Heart right ventricle (tissue), 16 donors: ENCODE measurements at regions of chr5 and their contacts with region 1.

Region 1: DNA sequence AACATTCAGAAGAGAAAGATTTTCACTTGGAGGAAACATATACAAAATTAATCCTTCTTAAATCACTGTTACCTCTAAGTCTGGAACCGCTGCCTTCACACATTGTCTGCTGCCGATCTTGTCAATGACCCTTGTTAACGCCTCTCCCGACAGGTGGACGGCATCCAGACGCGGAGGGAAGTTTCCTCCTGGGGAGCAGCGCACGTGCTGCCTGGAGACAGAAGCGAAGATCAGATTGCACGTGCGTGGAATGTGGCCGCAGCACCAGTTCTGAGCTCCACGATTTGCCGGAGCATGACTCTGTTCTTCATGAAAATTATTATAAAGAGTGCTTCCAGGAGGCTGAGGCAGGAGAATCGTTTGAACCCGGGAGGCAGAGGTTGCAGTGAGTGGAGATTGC is 183.6 kb upstream of the IRX4 start:
- DNase-seq: no peak
- ATAC-seq: no peak
- H3K4me3 ChIP-seq: no peak overlapping the region
- H3K27ac ChIP-seq: no peak overlapping the region
- H3K4me1 ChIP-seq: no peaks in the 10 kb centered on the region
- H3K27me3 ChIP-seq: peaks cover 0 to 19% (median 8%) of the 10 kb centered on the region in 7 donors
- CTCF ChIP-seq: no peak

Region 2: DNA sequence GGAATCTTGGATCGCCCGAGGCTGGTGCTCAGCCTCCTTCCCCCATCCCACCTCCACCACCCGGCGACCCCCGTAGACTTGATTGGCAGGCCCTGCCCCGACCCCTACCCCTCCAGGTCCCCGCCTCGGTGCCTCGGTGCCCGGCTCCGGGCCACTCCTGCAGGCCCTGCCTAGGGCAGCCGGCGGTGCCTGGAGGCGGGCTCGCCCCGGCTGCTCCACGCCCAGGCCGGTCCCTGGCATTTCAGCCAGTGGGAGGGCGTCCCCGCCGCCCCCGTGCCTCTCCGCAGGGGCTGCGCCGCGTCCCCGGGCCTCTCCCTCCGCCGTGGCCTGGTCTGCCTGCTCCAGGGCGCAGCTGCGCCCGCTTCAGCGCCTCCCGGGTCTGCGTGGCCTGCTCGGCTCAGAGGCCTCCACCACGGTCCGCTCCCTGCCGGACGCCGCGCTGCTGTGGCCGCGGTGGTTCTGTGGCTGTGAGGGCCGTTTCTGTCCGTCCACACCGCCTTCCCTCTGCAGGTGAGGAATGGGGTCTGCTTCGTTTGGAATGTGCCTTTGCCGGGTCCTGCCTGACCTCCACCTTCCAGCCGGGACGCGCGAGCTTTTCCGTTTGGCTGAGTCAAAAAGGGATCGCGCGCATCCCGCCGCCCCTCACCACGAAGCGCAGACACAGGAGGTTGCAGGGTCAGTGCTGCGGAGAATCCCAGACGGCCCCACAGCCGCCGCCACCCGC is 135.3 kb before region 1 on chr5:
- intact Hi-C with region 1: no loop called
- DNase-seq: peak; percentile 16 to 54
- ATAC-seq: peak; percentile 77 to 90 (median 82)
- H3K4me3 ChIP-seq: peak overlapping the region; percentile 10 to 68 (median 54)
- H3K27ac ChIP-seq: peak overlapping the region; percentile 53 to 86 (median 84)
- H3K4me1 ChIP-seq: peaks cover 0 to 15% (median 0%) of the 10 kb centered on the region in 9 donors
- H3K27me3 ChIP-seq: peaks cover 0 to 43% (median 21%) of the 10 kb centered on the region in 7 donors
- CTCF ChIP-seq: no peak

Region 3: GRCh38 chr5:2701592-2701991 is 635.2 kb after region 1 on chr5:
- intact Hi-C with region 1: loop called in 1 of 10 experiments (anchors 10 kb)
- DNase-seq: no peak
- ATAC-seq: no peak
- H3K4me3 ChIP-seq: no peak overlapping the region
- H3K27ac ChIP-seq: no peak overlapping the region
- H3K4me1 ChIP-seq: no peaks in the 10 kb centered on the region
- H3K27me3 ChIP-seq: peaks cover 0 to 30% (median 16%) of the 10 kb centered on the region in 7 donors
- CTCF ChIP-seq: no peak